CD4-positive, alpha-beta T cell (primary cell): ENCODE measurements at regions of chr5 and their contacts with region 1.

Region 1: GRCh38 chr5:73215891-73216610 is 43.1 kb downstream of the TMEM174 start:
- DNase-seq: peak; percentile 28 to 80 (median 50)
- ATAC-seq: peak; percentile 96
- H3K4me3 ChIP-seq: peak overlapping the region; percentile 28
- H3K4me3 Mint-ChIP-seq: peak overlapping the region; percentile 49
- H3K27ac ChIP-seq: no peak overlapping the region
- H3K27ac Mint-ChIP-seq: no peak overlapping the region
- H3K4me1 ChIP-seq: peaks cover 13% of the 10 kb centered on the region
- H3K4me1 Mint-ChIP-seq: peaks cover 12% of the 10 kb centered on the region
- H3K27me3 ChIP-seq: peaks cover 38 to 62% of the 10 kb centered on the region in 2 experiments
- H3K27me3 Mint-ChIP-seq: peaks cover 100% of the 10 kb centered on the region
- CTCF ChIP-seq: peak; percentile 71

Region 2: GRCh38 chr5:72231991-72232658 is 983.9 kb before region 1 on chr5:
- CTCF ChIA-PET with region 1: no interaction called
- POLR2A ChIA-PET with region 1: no interaction called
- intact Hi-C with region 1: no loop called
- DNase-seq: peak in 3 of 14 experiments; percentile 62 to 80 (median 71)
- ATAC-seq: peak; percentile 47
- H3K4me3 ChIP-seq: no peak overlapping the region
- H3K4me3 Mint-ChIP-seq: peak overlapping the region; percentile 44
- H3K27ac ChIP-seq: no peak overlapping the region
- H3K27ac Mint-ChIP-seq: no peak overlapping the region
- H3K4me1 ChIP-seq: peaks cover 15% of the 10 kb centered on the region
- H3K4me1 Mint-ChIP-seq: peaks cover 48% of the 10 kb centered on the region
- H3K27me3 ChIP-seq: no peaks in the 10 kb centered on the region
- H3K27me3 Mint-ChIP-seq: no peaks in the 10 kb centered on the region
- CTCF ChIP-seq: no peak

Region 3: GRCh38 chr5:72597456-72597948 is 618.5 kb before region 1 on chr5:
- CTCF ChIA-PET with region 1: no interaction called
- POLR2A ChIA-PET with region 1: no interaction called
- intact Hi-C with region 1: no loop called
- DNase-seq: no peak
- ATAC-seq: no peak
- H3K4me3 ChIP-seq: no peak overlapping the region
- H3K4me3 Mint-ChIP-seq: no peak overlapping the region
- H3K27ac ChIP-seq: no peak overlapping the region
- H3K27ac Mint-ChIP-seq: no peak overlapping the region
- H3K4me1 ChIP-seq: no peaks in the 10 kb centered on the region
- H3K4me1 Mint-ChIP-seq: no peaks in the 10 kb centered on the region
- H3K27me3 ChIP-seq: no peaks in the 10 kb centered on the region
- H3K27me3 Mint-ChIP-seq: peaks cover 5% of the 10 kb centered on the region
- CTCF ChIP-seq: no peak

Region 4: GRCh38 chr5:73229209-73229661 is 13.2 kb after region 1 on chr5:
- CTCF ChIA-PET with region 1: interaction called, 10 read pairs
- POLR2A ChIA-PET with region 1: no interaction called
- intact Hi-C with region 1: no loop called
- DNase-seq: no peak
- ATAC-seq: no peak
- H3K4me3 ChIP-seq: no peak overlapping the region
- H3K4me3 Mint-ChIP-seq: no peak overlapping the region
- H3K27ac ChIP-seq: no peak overlapping the region
- H3K27ac Mint-ChIP-seq: no peak overlapping the region
- H3K4me1 ChIP-seq: peaks cover 23% of the 10 kb centered on the region
- H3K4me1 Mint-ChIP-seq: peaks cover 30% of the 10 kb centered on the region
- H3K27me3 ChIP-seq: peaks cover 58 to 80% of the 10 kb centered on the region in 2 experiments
- H3K27me3 Mint-ChIP-seq: peaks cover 91% of the 10 kb centered on the region
- CTCF ChIP-seq: no peak